PC-9 (cell line): ENCODE measurements at regions of chr1 and their contacts with region 1.

Region 1: DNA sequence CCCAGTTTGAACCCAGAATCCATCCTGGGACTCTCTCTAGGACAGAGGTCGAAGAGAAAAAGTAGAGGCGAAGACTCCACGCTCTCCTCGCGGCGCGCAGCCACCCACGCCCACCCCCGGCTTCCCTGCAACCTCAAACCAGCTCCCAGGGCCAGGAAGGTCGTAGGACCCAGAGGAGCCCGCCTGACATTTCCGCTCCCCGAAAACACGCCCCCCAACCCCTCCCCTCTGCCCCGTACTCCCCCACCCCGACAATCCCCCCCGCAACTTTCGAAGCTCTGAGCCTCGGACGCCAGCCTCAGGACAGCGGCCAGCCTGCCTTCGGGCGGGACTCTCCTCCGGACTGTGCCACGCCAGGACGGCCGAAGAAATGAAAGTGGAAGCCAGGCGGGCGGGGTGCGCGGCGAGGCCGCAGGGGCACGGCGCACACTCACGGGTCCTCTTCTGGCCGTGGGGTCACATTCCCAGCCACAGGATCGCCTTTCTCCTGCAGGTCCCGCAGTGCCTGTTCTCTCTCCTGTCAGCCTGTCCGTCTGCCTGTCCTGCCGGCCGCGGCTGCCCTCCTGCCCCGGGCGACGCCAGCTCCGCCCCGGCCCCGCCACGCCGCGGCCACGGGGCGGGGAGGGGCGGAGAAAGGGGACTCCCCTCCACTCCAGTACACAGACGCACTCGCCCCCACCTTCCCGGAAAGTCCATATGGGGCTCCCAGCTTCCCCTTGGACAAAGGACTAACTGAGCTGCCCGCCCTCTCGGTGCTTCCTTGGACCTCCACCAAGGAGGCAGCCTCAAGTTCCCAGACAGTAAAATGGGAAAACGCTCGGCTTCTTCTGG is at the start of gene MOB3C:
- DNase-seq: peak; percentile 46 to 86
- H3K4me3 ChIP-seq: peak within 1 kb of the TSS; percentile 66
- H3K27ac ChIP-seq: peak within 1 kb of the TSS; percentile 53
- H3K4me1 ChIP-seq: peaks cover 54% of the 10 kb centered on the region
- H3K27me3 ChIP-seq: no peaks in the 10 kb centered on the region
- CTCF ChIP-seq: no peak
- total RNA-seq, gene MOB3C: 33.9 and 35.2 TPM in 2 replicates

Region 2: GRCh38 chr1:46188295-46189030 is 428.0 kb before region 1 on chr1:
- CTCF ChIA-PET with region 1: no interaction called
- POLR2A ChIA-PET with region 1: no interaction called
- intact Hi-C with region 1: no loop called
- DNase-seq: peak in 1 of 2 experiments; percentile 74
- H3K4me3 ChIP-seq: no peak overlapping the region
- H3K27ac ChIP-seq: peak overlapping the region; percentile 53
- H3K4me1 ChIP-seq: peaks cover 49% of the 10 kb centered on the region
- H3K27me3 ChIP-seq: no peaks in the 10 kb centered on the region
- CTCF ChIP-seq: peak; percentile 27; the same call in 1 of the 2 replicates

Region 3: DNA sequence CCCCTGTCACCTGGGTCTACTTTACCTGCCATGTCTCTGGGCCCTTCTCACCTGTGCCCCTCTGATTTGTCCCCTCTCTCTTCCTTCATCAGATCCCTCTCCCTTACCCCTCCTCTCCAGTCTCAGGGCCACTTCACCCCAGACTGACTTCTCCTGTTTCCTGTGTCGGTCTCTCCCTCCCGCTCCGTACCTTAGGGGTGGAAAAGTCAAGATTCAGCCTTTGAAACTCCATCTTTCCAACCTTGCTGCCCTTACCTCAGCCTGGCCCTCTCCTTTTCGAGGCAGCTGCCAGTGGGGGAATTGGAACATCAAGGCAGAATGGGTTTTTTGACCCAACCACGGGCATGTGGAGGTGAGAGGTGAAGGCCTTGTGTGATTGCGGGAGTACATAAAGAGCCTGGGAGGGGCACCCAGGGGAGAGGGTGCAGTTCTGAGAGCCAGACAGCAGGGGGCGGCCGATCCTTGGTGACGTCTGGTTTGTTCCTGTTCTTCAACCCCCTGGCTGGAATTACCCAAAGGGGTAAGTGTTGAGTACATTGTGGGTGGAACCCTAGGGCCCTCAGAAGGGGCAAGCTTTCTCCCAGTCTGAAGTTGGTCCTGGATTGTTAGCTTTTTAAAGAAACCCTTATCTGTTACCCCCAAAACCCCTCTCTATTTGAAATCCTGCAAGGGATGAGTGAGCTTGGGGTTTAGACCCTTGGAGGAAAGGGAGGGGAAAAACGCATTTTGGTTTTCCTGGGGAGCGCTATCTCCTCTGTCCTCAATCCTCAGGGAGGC is 139.2 kb before region 1 on chr1:
- CTCF ChIA-PET with region 1: no interaction called
- POLR2A ChIA-PET with region 1: no interaction called
- intact Hi-C with region 1: no loop called
- DNase-seq: peak; percentile 46 to 82
- H3K4me3 ChIP-seq: no peak overlapping the region
- H3K27ac ChIP-seq: no peak overlapping the region
- H3K4me1 ChIP-seq: peaks cover 9% of the 10 kb centered on the region; the same call in 1 of the 2 replicates
- H3K27me3 ChIP-seq: 0 out of 2 replicates have a peak, but pooled peaks cover 5% of the 10 kb centered on the region
- CTCF ChIP-seq: peak; percentile 96

Region 4: GRCh38 chr1:46547481-46548383 is 68.8 kb before region 1 on chr1:
- CTCF ChIA-PET with region 1: no interaction called
- POLR2A ChIA-PET with region 1: no interaction called
- intact Hi-C with region 1: loop called (anchors 2 kb)
- DNase-seq: peak; percentile 32 to 33
- H3K4me3 ChIP-seq: no peak overlapping the region
- H3K27ac ChIP-seq: no peak overlapping the region
- H3K4me1 ChIP-seq: no peaks in the 10 kb centered on the region
- H3K27me3 ChIP-seq: peaks cover 22% of the 10 kb centered on the region
- CTCF ChIP-seq: peak; percentile 72

Region 5: DNA sequence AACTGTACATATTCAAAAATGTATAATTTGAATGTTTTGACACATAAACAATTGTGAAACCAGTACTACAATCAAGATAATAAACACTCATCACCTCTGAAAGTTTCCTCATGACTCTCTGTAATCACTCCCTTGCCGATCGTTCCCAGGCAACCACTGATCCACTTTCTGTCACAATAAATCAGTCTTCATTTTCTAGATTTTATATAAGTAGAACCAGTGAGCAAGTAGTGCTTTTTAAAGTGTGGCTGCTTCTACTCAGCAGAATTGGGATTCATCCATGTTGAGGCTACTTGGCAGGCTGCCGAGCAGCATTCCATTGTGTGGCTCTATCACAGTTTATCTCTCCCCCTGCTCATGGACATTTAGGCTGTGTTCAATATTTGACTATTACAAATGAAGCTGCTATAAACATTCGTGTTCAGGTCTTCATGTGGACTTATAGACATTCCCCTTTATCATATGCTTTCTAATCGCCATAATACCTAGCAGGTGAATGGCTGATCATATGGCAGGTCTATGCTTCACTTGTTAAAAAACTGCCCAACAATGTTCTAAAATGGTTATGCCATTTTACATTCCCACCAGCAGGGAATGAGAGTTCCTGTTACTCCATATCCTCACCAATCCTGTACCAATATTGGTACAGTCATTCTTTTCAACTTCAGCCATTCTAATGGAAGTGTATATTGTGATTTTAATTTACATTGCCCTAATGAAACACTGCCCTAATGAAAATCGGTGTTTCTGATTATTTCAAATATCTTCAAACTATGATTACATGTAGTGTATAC is 75.7 kb after region 1 on chr1:
- CTCF ChIA-PET with region 1: no interaction called
- POLR2A ChIA-PET with region 1: interaction called, 19 read pairs
- intact Hi-C with region 1: no loop called
- DNase-seq: no peak
- H3K4me3 ChIP-seq: no peak overlapping the region
- H3K27ac ChIP-seq: no peak overlapping the region
- H3K4me1 ChIP-seq: peaks cover 6% of the 10 kb centered on the region; the same call in 1 of the 2 replicates
- H3K27me3 ChIP-seq: no peaks in the 10 kb centered on the region
- CTCF ChIP-seq: peak; percentile 36; the same call in 1 of the 2 replicates

Region 6: GRCh38 chr1:46735708-46736324 is 119.3 kb after region 1 on chr1:
- CTCF ChIA-PET with region 1: no interaction called
- POLR2A ChIA-PET with region 1: no interaction called
- intact Hi-C with region 1: no loop called
- DNase-seq: peak; percentile 44 to 50
- H3K4me3 ChIP-seq: no peak overlapping the region
- H3K27ac ChIP-seq: no peak overlapping the region
- H3K4me1 ChIP-seq: no peaks in the 10 kb centered on the region
- H3K27me3 ChIP-seq: peaks cover 8% of the 10 kb centered on the region; the same call in 1 of the 2 replicates
- CTCF ChIP-seq: peak; percentile 57

Region 7: DNA sequence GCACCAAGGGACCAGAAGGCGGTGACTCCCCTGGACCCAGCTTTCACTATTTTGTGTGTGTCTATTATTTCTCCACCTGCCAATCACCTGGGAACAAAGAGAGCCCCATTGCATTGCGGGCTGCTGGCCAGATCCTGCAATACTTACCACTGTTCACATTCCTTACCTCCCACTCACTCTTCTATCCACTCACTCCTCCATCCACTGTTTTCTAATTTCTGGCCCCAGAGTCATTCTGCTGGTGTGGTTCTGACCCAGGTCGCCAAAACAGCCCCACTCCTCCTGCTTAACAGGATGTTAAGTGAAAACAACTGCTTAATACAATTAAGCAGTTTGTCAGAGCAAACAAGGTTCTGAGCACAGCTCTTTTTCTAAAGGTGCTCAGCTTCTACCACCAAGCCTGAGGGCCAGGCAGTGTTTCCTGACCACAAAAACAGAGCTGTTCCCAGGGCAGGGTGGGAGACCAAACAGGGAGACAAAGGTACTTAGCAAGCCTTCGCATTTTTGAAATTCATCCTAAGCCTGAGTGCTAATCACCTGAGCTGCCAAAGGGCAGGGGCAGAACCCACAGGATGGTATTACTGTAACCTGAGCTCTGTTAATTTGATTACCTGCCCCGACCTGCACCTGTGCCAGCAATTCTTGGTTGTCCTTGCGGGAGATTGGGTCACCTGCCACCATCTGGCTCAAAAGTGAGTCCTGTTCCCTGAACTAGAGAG is 140.9 kb after region 1 on chr1:
- CTCF ChIA-PET with region 1: no interaction called
- POLR2A ChIA-PET with region 1: interaction called, 6 read pairs
- intact Hi-C with region 1: loop called (anchors 2 kb)
- DNase-seq: peak; percentile 87 to 96
- H3K4me3 ChIP-seq: peak overlapping the region; percentile 22; the same call in 1 of the 2 replicates
- H3K27ac ChIP-seq: peak overlapping the region; percentile 90
- H3K4me1 ChIP-seq: peaks cover 67% of the 10 kb centered on the region
- H3K27me3 ChIP-seq: no peaks in the 10 kb centered on the region
- CTCF ChIP-seq: no peak

Region 8: GRCh38 chr1:47333922-47334764 is 717.7 kb after region 1 on chr1:
- CTCF ChIA-PET with region 1: no interaction called
- POLR2A ChIA-PET with region 1: interaction called, 7 read pairs
- intact Hi-C with region 1: loop called (anchors 10 kb)
- DNase-seq: peak; percentile 62 to 77
- H3K4me3 ChIP-seq: peak overlapping the region; percentile 96
- H3K27ac ChIP-seq: peak overlapping the region; percentile 93
- H3K4me1 ChIP-seq: peaks cover 30% of the 10 kb centered on the region
- H3K27me3 ChIP-seq: no peaks in the 10 kb centered on the region
- CTCF ChIP-seq: no peak; the same call in 1 of the 2 replicates